Activated CD8-positive, alpha-beta T cell treated with anti-CD3 and anti-CD28 coated beads for 36 hours (primary cell): ENCODE measurements at regions of chr7 and their contacts with region 1.

Region 1: GRCh38 chr7:55255496-55256435 is 109.4 kb upstream of the LANCL2 start:
- DNase-seq: peak; percentile 79
- ATAC-seq: peak; percentile 93
- H3K4me3 Mint-ChIP-seq: peak overlapping the region; percentile 74
- H3K27ac Mint-ChIP-seq: peak overlapping the region; percentile 28
- H3K4me1 Mint-ChIP-seq: peaks cover 3% of the 10 kb centered on the region
- H3K27me3 Mint-ChIP-seq: peaks cover 39% of the 10 kb centered on the region
- CTCF ChIP-seq: no peak

Region 2: DNA sequence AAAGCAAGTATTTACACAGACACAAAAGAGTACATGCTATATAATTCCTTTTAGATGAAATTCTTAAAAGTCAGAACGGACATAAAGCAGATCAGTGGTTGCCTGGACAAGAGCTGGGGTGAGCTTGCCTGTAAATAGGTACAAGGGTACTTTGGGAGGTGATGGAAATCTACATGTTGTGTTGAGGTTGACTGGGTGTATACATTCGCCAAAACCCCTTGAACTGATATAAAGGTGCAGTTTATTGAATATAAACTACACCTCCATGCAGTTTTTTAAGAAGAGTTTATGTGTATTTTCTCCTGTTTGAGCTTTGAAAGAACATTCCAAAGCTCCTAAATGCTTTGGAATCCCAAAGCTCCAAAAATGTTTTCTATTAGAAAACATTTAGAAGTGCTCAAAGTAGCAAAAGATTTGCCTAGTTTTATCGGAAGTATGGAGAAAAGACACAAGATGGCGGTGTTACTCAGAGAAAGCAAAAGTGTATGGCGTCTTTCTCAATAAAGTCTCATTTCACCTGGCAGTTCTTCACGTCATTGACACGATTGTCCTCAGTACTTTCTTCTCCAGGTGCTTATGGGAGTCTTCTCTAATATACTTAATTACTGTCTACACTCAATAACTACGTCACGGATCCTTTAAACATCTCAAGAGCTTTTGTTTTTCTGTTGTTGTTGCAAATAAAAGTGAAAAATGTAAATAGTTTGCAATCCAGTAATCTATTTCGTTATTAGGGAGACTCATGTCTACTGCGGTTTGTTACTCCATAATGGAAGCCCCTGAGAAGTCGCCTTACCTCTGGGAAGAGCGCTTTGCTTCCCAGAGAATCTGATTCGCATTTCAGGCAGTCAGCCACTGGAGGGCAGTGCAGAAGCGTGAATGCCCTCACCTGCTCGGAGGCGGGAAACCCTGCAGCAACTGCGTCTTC is 482.0 kb before region 1 on chr7:
- CTCF ChIA-PET with region 1: interaction called, 135 read pairs
- POLR2A ChIA-PET with region 1: interaction called, 4 read pairs
- intact Hi-C with region 1: loop called (anchors 5 kb)
- DNase-seq: peak; percentile 77
- ATAC-seq: peak; percentile 81
- H3K4me3 Mint-ChIP-seq: peak overlapping the region; percentile 59
- H3K27ac Mint-ChIP-seq: no peak overlapping the region
- H3K4me1 Mint-ChIP-seq: no peaks in the 10 kb centered on the region
- H3K27me3 Mint-ChIP-seq: peaks cover 20% of the 10 kb centered on the region
- CTCF ChIP-seq: peak; percentile 87

Region 3: GRCh38 chr7:54788664-54789063 is 467.1 kb before region 1 on chr7:
- CTCF ChIA-PET with region 1: interaction called, 49 read pairs
- POLR2A ChIA-PET with region 1: no interaction called
- intact Hi-C with region 1: loop called (anchors 5 kb)
- DNase-seq: peak; percentile 58
- ATAC-seq: peak; percentile 98
- H3K4me3 Mint-ChIP-seq: no peak overlapping the region
- H3K27ac Mint-ChIP-seq: no peak overlapping the region
- H3K4me1 Mint-ChIP-seq: peaks cover 6% of the 10 kb centered on the region
- H3K27me3 Mint-ChIP-seq: peaks cover 26% of the 10 kb centered on the region
- CTCF ChIP-seq: peak; percentile 31

Region 4: GRCh38 chr7:55237156-55237893 is 18.4 kb before region 1 on chr7:
- CTCF ChIA-PET with region 1: interaction called, 12 read pairs
- POLR2A ChIA-PET with region 1: no interaction called
- intact Hi-C with region 1: no loop called
- DNase-seq: no peak
- ATAC-seq: no peak
- H3K4me3 Mint-ChIP-seq: no peak overlapping the region
- H3K27ac Mint-ChIP-seq: no peak overlapping the region
- H3K4me1 Mint-ChIP-seq: no peaks in the 10 kb centered on the region
- H3K27me3 Mint-ChIP-seq: peaks cover 11% of the 10 kb centered on the region
- CTCF ChIP-seq: no peak

Region 5: GRCh38 chr7:55265836-55266642 is 10.3 kb after region 1 on chr7:
- CTCF ChIA-PET with region 1: interaction called, 38 read pairs
- POLR2A ChIA-PET with region 1: no interaction called
- intact Hi-C with region 1: no loop called
- DNase-seq: no peak
- ATAC-seq: no peak
- H3K4me3 Mint-ChIP-seq: no peak overlapping the region
- H3K27ac Mint-ChIP-seq: no peak overlapping the region
- H3K4me1 Mint-ChIP-seq: no peaks in the 10 kb centered on the region
- H3K27me3 Mint-ChIP-seq: peaks cover 3% of the 10 kb centered on the region
- CTCF ChIP-seq: no peak

Region 6: GRCh38 chr7:55309040-55309991 is 53.5 kb after region 1 on chr7:
- CTCF ChIA-PET with region 1: interaction called, 17 read pairs
- POLR2A ChIA-PET with region 1: no interaction called
- intact Hi-C with region 1: no loop called
- DNase-seq: peak; percentile 94
- ATAC-seq: peak; percentile 88
- H3K4me3 Mint-ChIP-seq: peak overlapping the region; percentile 12
- H3K27ac Mint-ChIP-seq: peak overlapping the region; percentile 86
- H3K4me1 Mint-ChIP-seq: peaks cover 28% of the 10 kb centered on the region
- H3K27me3 Mint-ChIP-seq: peaks cover 11% of the 10 kb centered on the region
- CTCF ChIP-seq: no peak